PC-3 (cell line): ENCODE measurements at regions of chr22 and their contacts with region 1.

Region 1: DNA sequence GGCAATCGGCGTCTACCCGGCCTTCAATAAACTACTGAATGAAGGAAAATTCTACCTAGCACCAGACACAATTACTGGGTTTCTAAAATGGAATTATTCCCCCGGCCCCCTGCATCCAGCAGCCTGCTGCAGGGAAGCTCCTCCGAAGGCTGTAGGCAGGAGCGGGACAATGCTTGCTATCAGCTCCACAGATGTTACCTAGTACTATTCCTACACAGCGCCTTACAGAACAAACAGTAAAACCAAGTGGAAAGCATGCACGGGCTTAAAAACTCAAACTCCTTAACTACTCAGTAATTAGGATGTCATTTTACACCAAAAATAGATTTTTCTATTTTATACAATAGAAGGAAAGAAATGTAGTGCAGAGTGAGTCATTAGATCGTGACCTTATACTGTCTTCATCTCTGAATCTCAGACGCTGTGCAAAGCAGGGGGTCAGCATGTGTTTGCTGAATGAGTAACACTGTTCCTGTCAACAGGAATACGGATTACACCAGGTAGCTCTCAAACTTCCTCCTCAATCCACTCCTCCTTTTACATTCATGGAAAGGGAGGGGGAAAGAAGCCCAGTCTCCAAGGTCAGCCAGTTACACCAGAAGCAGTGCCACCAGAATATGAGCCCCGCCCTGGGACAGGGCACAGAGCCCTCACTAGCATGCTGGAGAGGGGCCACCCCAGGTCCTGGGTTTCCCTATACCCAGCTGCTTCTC is 74.9 kb downstream of the PACSIN2 start:
- DNase-seq: peak; percentile 93
- ATAC-seq: peak; percentile 87
- H3K4me3 ChIP-seq: peak overlapping the region; percentile 49
- H3K27ac ChIP-seq: peak overlapping the region; percentile 99
- H3K4me1 ChIP-seq: peaks cover 45% of the 10 kb centered on the region
- H3K27me3 ChIP-seq: no peaks in the 10 kb centered on the region
- CTCF ChIP-seq: no peak

Region 2: DNA sequence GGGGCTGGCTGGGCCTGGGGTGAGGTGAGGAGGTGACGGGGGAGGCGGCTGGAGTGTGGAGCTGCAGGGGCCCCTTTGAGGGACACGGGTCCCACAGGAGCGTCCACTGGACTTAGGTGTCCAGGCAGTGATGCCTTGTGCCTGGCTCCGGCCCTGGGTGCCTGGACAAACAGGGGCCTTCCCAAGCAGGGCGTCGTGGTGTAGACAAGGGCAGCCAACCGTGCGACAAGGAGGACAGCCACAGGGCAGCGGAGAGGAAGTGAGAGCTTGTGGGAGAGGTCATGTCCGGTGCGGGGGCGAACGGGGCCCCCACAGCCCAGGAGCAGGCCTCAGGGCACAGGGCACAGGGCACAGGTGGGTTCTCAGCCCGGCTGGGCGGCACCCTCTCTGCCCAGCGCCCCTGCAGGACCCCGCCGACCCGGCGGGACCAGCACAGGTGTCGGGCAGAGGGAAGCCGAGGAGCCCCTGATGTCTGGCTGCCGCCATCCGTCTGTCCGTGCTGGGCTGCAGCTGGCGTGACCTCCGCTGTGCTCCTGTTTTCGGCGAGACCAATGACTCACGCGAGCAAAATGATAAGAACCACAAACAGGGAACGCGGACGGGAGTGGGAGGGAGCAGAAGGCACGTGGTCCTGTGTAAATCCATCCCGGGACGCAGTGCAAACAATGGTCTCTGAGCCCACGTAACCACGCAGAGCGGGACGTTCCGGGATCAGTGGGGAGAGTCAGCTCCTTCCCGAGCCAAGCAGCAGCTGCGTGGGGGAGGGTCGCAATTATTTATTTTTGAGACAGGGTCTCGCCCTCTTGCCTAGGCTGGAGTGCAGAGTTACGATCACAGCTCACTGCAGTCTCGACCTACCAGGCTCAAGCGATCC is 170.3 kb before region 1 on chr22:
- CTCF ChIA-PET with region 1: no interaction called
- POLR2A ChIA-PET with region 1: no interaction called
- intact Hi-C with region 1: no loop called
- DNase-seq: no peak
- ATAC-seq: no peak
- H3K4me3 ChIP-seq: no peak overlapping the region
- H3K27ac ChIP-seq: no peak overlapping the region
- H3K4me1 ChIP-seq: no peaks in the 10 kb centered on the region
- H3K27me3 ChIP-seq: no peaks in the 10 kb centered on the region
- CTCF ChIP-seq: no peak

Region 3: DNA sequence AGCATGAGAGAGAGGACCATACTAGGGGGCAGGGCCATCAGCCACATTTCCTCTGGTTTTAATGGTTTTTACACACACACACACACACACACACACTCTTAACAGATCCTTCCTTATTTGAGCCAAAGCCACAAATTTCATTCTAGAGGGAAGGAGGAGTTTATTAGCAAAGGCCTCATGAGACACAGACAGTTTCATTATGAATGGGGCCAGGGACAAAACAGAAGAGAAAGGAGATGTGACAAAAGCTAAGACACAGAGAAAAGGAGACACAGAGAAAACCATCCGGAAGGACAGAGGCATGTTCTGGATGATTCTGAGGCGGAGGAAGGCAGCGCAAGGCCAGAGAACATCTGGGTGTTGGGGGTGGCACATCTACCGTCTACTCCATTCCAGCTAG is 50.8 kb before region 1 on chr22:
- CTCF ChIA-PET with region 1: no interaction called
- POLR2A ChIA-PET with region 1: no interaction called
- intact Hi-C with region 1: no loop called
- DNase-seq: no peak
- ATAC-seq: no peak
- H3K4me3 ChIP-seq: no peak overlapping the region
- H3K27ac ChIP-seq: no peak overlapping the region
- H3K4me1 ChIP-seq: no peaks in the 10 kb centered on the region
- H3K27me3 ChIP-seq: no peaks in the 10 kb centered on the region
- CTCF ChIP-seq: no peak

Region 4: DNA sequence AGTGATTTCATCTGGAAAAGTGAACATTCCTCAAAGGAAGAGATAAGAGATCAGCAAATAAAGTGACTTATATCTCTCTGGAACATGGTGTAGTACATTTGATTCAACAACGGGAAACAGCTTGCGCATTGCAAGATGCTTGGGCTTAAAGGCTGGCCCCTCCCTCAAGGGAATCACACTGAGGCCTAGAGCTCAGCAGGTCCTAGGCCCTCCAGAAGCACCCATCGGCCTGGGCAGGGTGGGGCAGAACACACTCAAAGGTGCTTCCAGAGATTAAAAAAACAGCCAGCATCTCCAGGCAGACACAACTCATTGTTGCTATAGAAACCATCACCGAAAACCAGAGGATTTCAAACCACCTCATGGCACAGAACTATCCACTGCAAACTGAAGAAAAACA is 14.0 kb before region 1 on chr22:
- CTCF ChIA-PET with region 1: no interaction called
- POLR2A ChIA-PET with region 1: interaction called, 10 read pairs
- intact Hi-C with region 1: no loop called
- DNase-seq: peak; percentile 24
- ATAC-seq: peak; percentile 20; the same call in 1 of the 2 replicates
- H3K4me3 ChIP-seq: no peak overlapping the region
- H3K27ac ChIP-seq: no peak overlapping the region
- H3K4me1 ChIP-seq: peaks cover 35% of the 10 kb centered on the region
- H3K27me3 ChIP-seq: no peaks in the 10 kb centered on the region
- CTCF ChIP-seq: no peak

Region 5: DNA sequence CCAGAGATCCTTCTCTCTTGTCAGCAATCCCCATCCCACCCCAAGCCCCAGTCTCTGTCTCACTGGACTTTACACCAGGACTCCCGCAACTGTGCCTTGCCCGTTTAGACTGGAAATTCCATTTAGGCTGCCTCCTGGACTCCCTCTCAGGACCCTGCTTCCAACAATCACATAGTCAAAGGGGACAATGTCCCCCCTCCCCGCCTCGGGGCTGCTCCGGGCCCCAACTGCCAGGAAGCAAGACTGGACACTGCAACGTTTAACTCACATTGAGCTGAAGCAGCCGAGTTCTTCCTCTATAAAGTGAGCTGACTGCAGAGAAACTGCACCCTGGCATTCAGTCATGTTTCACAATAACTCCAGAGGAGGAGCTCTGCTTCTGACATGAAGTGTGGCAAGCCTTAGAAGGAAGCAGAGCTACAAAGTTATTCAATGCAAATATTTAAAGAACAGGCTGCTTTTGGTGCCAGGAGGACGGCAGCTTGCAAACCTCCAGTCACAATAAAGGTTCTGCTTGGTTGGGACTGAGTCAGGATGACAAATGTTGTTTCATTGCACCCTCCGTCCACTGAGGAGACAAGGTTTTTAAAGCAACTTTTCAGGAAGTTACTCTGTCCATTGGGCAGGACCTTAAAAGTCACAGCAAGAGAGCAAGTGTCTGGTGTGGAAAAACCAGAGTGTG is 54.9 kb after region 1 on chr22:
- CTCF ChIA-PET with region 1: interaction called, 4 read pairs
- POLR2A ChIA-PET with region 1: no interaction called
- intact Hi-C with region 1: loop called (anchors 1 kb)
- DNase-seq: peak; percentile 94
- ATAC-seq: peak; percentile 90
- H3K4me3 ChIP-seq: peak overlapping the region; percentile 54
- H3K27ac ChIP-seq: peak overlapping the region; percentile 88
- H3K4me1 ChIP-seq: peaks cover 51% of the 10 kb centered on the region
- H3K27me3 ChIP-seq: no peaks in the 10 kb centered on the region
- CTCF ChIP-seq: no peak

Region 6: GRCh38 chr22:43151251-43152002 is 211.3 kb after region 1 on chr22 and contains the start of gene TSPO:
- CTCF ChIA-PET with region 1: no interaction called
- POLR2A ChIA-PET with region 1: no interaction called
- intact Hi-C with region 1: no loop called
- DNase-seq: peak; percentile 39
- ATAC-seq: peak; percentile 64
- H3K4me3 ChIP-seq: peak within 1 kb of the TSS; percentile 70
- H3K27ac ChIP-seq: peak within 1 kb of the TSS; percentile 73
- H3K4me1 ChIP-seq: peaks cover 13% of the 10 kb centered on the region; the same call in 1 of the 2 replicates
- H3K27me3 ChIP-seq: no peaks in the 10 kb centered on the region
- CTCF ChIP-seq: no peak
- total RNA-seq, gene TSPO: 283 and 349 TPM in 2 replicates

Region 7: DNA sequence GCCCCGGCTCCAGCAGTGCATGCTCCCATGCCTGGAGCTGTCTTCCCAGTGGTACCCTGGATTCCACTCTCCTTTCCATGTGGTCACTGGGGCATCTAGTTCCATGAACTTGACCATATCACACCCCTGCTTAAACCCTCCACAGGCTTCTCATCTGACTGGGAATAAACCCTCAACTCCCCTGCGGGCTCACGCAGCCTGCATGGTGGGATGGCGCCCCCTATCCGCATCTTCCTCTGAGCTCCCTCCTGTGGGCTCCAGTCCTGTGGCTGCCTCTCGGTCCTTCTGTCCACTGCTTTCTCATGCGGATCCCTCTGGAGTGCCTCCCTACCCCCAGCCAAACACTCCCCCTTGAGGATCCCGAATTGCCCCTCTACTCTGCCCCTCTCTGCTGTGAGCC is 288.2 kb after region 1 on chr22:
- CTCF ChIA-PET with region 1: no interaction called
- POLR2A ChIA-PET with region 1: no interaction called
- intact Hi-C with region 1: no loop called
- DNase-seq: peak; percentile 35
- ATAC-seq: no peak
- H3K4me3 ChIP-seq: no peak overlapping the region
- H3K27ac ChIP-seq: no peak overlapping the region
- H3K4me1 ChIP-seq: no peaks in the 10 kb centered on the region
- H3K27me3 ChIP-seq: no peaks in the 10 kb centered on the region
- CTCF ChIP-seq: peak; percentile 55